H1 (cell line): ENCODE measurements at regions of chr4 and their contacts with region 1.

Region 1: DNA sequence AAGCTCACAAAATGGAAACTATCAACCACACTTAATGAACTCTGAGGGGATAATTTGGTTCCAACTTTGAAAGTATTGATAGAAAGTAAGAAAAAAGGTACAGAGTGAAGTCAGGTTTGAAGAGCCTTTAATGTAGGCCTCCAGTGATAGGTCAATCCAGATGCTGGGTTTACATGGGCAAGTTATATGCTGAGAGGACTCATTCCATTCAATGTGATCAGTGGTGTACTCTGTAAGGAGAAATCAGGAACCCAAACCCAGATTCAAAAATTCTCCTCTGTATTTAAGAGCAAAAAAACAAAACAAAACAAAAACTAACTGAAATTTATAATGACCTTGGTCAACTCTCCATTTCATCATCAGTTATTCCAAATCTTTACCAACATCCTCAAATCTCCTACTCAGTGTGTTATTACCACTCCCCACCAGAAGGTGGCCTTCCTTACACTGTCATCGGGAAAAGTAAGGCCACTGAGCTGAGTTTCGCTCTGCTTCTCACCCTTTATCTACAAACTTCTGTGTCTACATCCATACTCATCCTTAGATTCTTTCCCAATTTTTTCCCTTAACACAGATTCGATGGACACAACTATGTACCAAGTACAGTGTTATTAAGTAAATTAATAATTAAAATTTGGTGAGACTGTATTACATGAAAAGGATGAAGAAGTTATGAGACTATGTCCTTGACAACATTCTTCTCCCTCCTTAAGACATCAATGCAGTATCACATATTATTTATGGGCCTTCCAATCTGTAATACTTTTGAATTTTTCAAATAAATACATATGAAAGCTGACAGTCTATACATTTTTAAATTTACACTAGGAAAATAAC is 88.3 kb downstream of the ZAR1 start:
- DNase-seq: peak in 1 of 2 experiments; percentile 57
- H3K4me3 ChIP-seq: no peak overlapping the region
- H3K27ac ChIP-seq: no peak overlapping the region
- H3K4me1 ChIP-seq: no peaks in the 10 kb centered on the region
- H3K27me3 ChIP-seq: no peaks in the 10 kb centered on the region
- CTCF ChIP-seq: peak; percentile 26 to 80 (median 64)
- EP300 ChIP-seq: no peak
- POLR2A ChIP-seq: no peak
- RAD21 ChIP-seq: peak; percentile 86 to 87

Region 2: GRCh38 chr4:48403779-48404178 is 174.6 kb before region 1 on chr4:
- CTCF ChIA-PET with region 1: no interaction called
- POLR2A ChIA-PET with region 1: no interaction called
- DNase-seq: no peak
- H3K4me3 ChIP-seq: no peak overlapping the region
- H3K27ac ChIP-seq: no peak overlapping the region
- H3K4me1 ChIP-seq: no peaks in the 10 kb centered on the region; a peak in 1 of 7 replicates
- H3K27me3 ChIP-seq: no peaks in the 10 kb centered on the region
- CTCF ChIP-seq: no peak
- EP300 ChIP-seq: no peak
- POLR2A ChIP-seq: no peak
- RAD21 ChIP-seq: no peak

Region 3: DNA sequence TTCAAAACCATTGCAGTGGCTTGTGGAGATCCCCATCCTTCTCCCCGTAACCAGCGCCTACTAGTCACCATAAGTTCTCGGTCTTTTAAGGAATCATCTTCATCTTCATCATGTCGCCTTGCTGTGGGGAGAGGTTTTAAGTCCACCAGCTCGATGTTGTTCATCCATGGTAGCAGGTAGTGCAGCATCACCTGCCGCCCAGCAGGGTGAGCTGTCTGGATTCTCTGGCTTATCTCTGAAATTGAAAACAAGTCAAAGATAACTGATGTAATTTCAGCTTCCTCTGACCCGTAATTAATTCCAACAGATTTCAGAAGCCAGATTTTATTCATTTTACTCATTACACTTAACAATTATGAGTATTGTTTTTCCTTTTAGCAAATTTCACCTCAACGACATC is 20.9 kb before region 1 on chr4:
- CTCF ChIA-PET with region 1: interaction called, 12 read pairs
- POLR2A ChIA-PET with region 1: no interaction called
- DNase-seq: no peak
- H3K4me3 ChIP-seq: no peak overlapping the region
- H3K27ac ChIP-seq: no peak overlapping the region
- H3K4me1 ChIP-seq: no peaks in the 10 kb centered on the region
- H3K27me3 ChIP-seq: no peaks in the 10 kb centered on the region
- CTCF ChIP-seq: peak; percentile 33 to 68 (median 64); a peak in 3 of 4 replicates
- EP300 ChIP-seq: no peak
- POLR2A ChIP-seq: no peak
- RAD21 ChIP-seq: peak; percentile 27 to 52; a peak in 3 of 4 replicates

Region 4: DNA sequence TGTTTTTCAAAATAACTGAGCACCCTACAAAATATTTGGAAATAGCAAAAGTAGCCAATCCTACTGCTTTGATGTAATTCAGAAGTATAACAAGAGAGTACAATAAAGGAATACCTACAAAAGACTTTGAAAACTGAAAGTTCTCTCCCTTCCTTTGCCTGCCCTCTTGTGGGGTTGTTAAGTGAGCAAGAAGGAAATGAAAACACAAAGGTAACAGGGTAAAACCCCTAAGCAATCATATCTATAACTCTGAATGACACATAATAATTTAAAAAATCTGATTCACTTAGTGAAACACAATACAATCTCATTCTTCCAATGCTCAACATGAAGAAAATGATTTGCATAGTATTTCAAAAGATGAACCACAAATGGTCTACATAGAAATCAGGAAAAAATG is 103.5 kb after region 1 on chr4:
- CTCF ChIA-PET with region 1: interaction called, 10 read pairs
- POLR2A ChIA-PET with region 1: no interaction called
- DNase-seq: no peak
- H3K4me3 ChIP-seq: no peak overlapping the region
- H3K27ac ChIP-seq: no peak overlapping the region
- H3K4me1 ChIP-seq: no peaks in the 10 kb centered on the region
- H3K27me3 ChIP-seq: no peaks in the 10 kb centered on the region
- CTCF ChIP-seq: peak in 2 of 3 experiments; percentile 29 to 31; a peak in 2 of 4 replicates
- EP300 ChIP-seq: no peak
- POLR2A ChIP-seq: no peak
- RAD21 ChIP-seq: peak; percentile 53 to 54

Region 5: GRCh38 chr4:48779998-48780742 is 201.8 kb after region 1 on chr4 and contains the start of gene FRYL:
- CTCF ChIA-PET with region 1: interaction called, 12 read pairs
- POLR2A ChIA-PET with region 1: no interaction called
- DNase-seq: peak; percentile 96 to 99
- H3K4me3 ChIP-seq: peak within 1 kb of the TSS; percentile 82 to 92 (median 84)
- H3K27ac ChIP-seq: peak within 1 kb of the TSS; percentile 67; the same call in 1 of the 2 replicates
- H3K4me1 ChIP-seq: peaks cover 0 to 8% (median under 1%) of the 10 kb centered on the region in 4 experiments; a peak in 4 of 7 replicates
- H3K27me3 ChIP-seq: no peaks in the 10 kb centered on the region
- CTCF ChIP-seq: no peak
- EP300 ChIP-seq: no peak
- POLR2A ChIP-seq: peak in 1 of 2 experiments; percentile 59; a peak in 2 of 3 replicates
- RAD21 ChIP-seq: peak in 1 of 2 experiments; percentile 23; a peak in 1 of 4 replicates
- total RNA-seq, gene FRYL: 36.5 and 36.8 TPM in 2 replicates